Activated CD4-positive, alpha-beta memory T cell treated with anti-CD3 and anti-CD28 coated beads for 36 hours (primary cell): ENCODE measurements at regions of chr3 and their contacts with region 1.

Region 1: GRCh38 chr3:58217209-58217811 is 6.5 kb upstream of the DNASE1L3 start:
- DNase-seq: peak; percentile 71
- H3K4me3 Mint-ChIP-seq: no peak overlapping the region
- H3K27ac Mint-ChIP-seq: no peak overlapping the region
- H3K4me1 Mint-ChIP-seq: peaks cover 37% of the 10 kb centered on the region
- H3K27me3 Mint-ChIP-seq: peaks cover 6% of the 10 kb centered on the region

Region 2: GRCh38 chr3:58008140-58009025 is 208.9 kb before region 1 on chr3 and contains the start of gene FLNB:
- CTCF ChIA-PET with region 1: interaction called, 15 read pairs
- POLR2A ChIA-PET with region 1: no interaction called
- intact Hi-C with region 1: loop called (anchors 1 kb)
- DNase-seq: peak; percentile 87
- H3K4me3 Mint-ChIP-seq: peak within 1 kb of the TSS; percentile 91
- H3K27ac Mint-ChIP-seq: peak within 1 kb of the TSS; percentile 71
- H3K4me1 Mint-ChIP-seq: peaks cover 25% of the 10 kb centered on the region
- H3K27me3 Mint-ChIP-seq: no peaks in the 10 kb centered on the region
- total RNA-seq, gene FLNB: 23.1 to 26.0 TPM

Region 3: GRCh38 chr3:58167431-58168351 is 49.6 kb before region 1 on chr3:
- CTCF ChIA-PET with region 1: interaction called, 10 read pairs
- POLR2A ChIA-PET with region 1: no interaction called
- intact Hi-C with region 1: no loop called
- DNase-seq: peak; percentile 76
- H3K4me3 Mint-ChIP-seq: no peak overlapping the region
- H3K27ac Mint-ChIP-seq: no peak overlapping the region
- H3K4me1 Mint-ChIP-seq: no peaks in the 10 kb centered on the region
- H3K27me3 Mint-ChIP-seq: no peaks in the 10 kb centered on the region

Region 4: GRCh38 chr3:58177747-58178527 is 39.4 kb before region 1 on chr3:
- CTCF ChIA-PET with region 1: interaction called, 37 read pairs
- POLR2A ChIA-PET with region 1: no interaction called
- intact Hi-C with region 1: loop called (anchors 2 kb)
- DNase-seq: peak; percentile 92
- H3K4me3 Mint-ChIP-seq: peak overlapping the region; percentile 39
- H3K27ac Mint-ChIP-seq: no peak overlapping the region
- H3K4me1 Mint-ChIP-seq: peaks cover 11% of the 10 kb centered on the region
- H3K27me3 Mint-ChIP-seq: no peaks in the 10 kb centered on the region

Region 5: DNA sequence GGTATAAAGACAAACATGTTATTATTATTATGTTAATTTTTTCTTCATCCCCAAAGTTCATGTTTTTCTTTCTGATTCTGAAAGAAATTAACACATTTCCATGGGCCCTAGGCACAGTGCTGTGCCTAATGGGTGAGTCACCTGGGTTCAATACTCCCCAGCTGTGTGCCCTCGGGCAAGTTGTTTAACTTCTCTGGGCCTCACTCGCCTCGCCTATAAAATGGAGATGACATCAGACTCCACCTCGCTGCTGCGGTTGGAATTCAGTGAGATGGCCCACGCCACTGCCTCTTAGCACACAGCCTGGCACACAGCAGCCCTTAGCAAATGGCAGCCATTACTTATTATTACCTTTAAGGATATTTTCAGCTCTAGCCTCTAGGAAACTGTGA is 29.1 kb before region 1 on chr3:
- CTCF ChIA-PET with region 1: interaction called, 188 read pairs
- POLR2A ChIA-PET with region 1: interaction called, 3 read pairs
- intact Hi-C with region 1: loop called (anchors 1 kb)
- DNase-seq: no peak
- H3K4me3 Mint-ChIP-seq: no peak overlapping the region
- H3K27ac Mint-ChIP-seq: no peak overlapping the region
- H3K4me1 Mint-ChIP-seq: no peaks in the 10 kb centered on the region
- H3K27me3 Mint-ChIP-seq: no peaks in the 10 kb centered on the region

Region 6: GRCh38 chr3:58206406-58207011 is 10.8 kb before region 1 on chr3:
- CTCF ChIA-PET with region 1: interaction called, 9 read pairs
- POLR2A ChIA-PET with region 1: no interaction called
- intact Hi-C with region 1: loop called (anchors 1 kb)
- DNase-seq: peak; percentile 63
- H3K4me3 Mint-ChIP-seq: no peak overlapping the region
- H3K27ac Mint-ChIP-seq: no peak overlapping the region
- H3K4me1 Mint-ChIP-seq: peaks cover 13% of the 10 kb centered on the region
- H3K27me3 Mint-ChIP-seq: peaks cover 18% of the 10 kb centered on the region

Region 7: DNA sequence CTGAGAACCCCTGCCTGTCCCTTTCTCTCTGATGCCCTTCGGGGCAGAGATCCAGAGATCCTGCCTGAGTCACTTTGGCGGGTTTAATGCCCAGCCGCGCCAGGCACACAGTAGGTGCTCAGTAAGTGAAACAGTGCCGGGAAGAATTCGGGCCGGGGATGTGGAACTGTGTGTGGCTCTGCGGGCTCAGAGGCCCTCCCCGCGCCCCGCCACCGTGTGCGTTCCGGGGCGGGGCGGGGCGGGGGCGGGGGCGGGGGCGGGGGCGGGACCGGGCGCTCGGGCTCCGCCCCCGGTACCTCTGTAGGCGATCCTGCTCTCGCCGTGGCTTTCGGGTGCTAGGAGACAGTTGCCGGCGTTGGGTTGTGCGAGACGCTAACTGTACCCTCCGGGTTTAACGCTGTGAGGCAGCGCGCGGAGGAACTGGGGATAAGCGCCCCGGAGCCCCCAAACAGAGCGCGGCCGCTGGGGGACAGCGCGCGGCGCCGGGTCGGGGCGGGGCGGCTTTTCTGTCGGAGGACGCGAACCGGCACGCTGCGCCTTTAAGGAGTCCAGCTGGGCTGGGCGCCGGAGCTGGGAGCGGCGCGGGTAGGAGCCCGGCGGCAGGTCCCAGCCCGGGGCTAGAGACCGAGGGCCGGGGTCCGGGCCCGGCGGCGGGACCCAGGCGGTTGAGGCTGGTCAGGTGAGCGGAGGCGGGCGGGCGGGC is 20.1 kb after region 1 on chr3 and contains the start of gene ABHD6:
- CTCF ChIA-PET with region 1: interaction called, 6 read pairs
- POLR2A ChIA-PET with region 1: no interaction called
- intact Hi-C with region 1: loop called (anchors 2 kb)
- DNase-seq: peak; percentile 85
- H3K4me3 Mint-ChIP-seq: peak within 1 kb of the TSS; percentile 85
- H3K27ac Mint-ChIP-seq: peak within 1 kb of the TSS; percentile 62
- H3K4me1 Mint-ChIP-seq: peaks cover 8% of the 10 kb centered on the region
- H3K27me3 Mint-ChIP-seq: peaks cover 12% of the 10 kb centered on the region
- total RNA-seq, gene ABHD6: 3.9 to 4.1 TPM